Right cardiac atrium (tissue), 5 donors: ENCODE measurements at regions of chr6 and their contacts with region 1.

Region 1: GRCh38 chr6:46410334-46410953 is 80.8 kb downstream of the RCAN2 start:
- DNase-seq: no peak
- ATAC-seq: peak in 1 of 2 donors; percentile 45
- H3K4me3 ChIP-seq: no peak overlapping the region
- H3K27ac ChIP-seq: no peak overlapping the region
- H3K4me1 ChIP-seq: peaks cover 9% of the 10 kb centered on the region
- H3K27me3 ChIP-seq: no peaks in the 10 kb centered on the region

Region 2: DNA sequence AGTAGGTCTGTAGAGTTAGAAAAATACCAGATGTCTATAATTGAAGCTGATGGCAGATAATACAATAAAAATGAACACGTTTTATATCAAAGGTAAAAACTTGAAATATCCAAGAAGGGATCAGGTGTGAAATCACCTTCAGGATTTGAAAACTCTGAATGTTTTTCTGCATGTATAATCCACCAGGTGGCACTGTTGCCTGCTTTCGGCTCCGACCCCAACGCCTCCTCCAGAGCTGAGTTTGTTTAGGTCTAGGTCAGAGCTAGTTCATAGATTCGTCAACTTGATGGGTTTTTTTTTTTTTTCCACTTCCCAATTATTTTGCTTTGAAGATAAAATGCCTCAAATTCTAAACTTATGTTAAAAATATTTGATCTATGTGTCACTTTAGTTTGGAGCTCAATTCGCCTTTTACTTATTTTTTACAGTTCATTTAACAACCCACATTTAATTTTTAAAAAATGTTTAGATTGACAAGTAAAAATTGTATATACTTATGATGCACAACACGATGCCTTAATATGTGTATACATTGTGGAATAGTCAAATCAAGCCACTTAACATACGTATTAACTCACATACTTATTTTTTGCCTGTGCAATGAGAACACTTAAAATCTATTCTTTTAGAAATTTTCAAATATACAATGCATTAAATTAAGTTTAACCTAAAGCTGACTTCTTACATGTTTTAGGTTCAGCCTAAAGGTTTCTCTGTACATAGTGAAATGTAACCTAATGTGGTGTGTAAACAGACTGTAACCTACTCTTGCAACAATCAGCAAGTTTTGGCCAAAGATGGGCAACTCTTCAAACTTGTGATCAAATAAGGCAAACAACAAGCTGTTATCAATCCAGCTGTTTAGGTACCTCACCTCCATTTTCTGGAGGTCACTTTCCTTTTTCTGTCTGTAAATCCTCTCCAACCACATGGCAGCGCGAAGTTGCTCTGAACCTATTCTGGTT is 320.0 kb before region 1 on chr6:
- intact Hi-C with region 1: loop called (anchors 5 kb)
- DNase-seq: peak; percentile 50 to 74 (median 61)
- ATAC-seq: peak; percentile 51 to 68
- H3K4me3 ChIP-seq: no peak overlapping the region
- H3K27ac ChIP-seq: no peak overlapping the region
- H3K4me1 ChIP-seq: no peaks in the 10 kb centered on the region
- H3K27me3 ChIP-seq: no peaks in the 10 kb centered on the region

Region 3: DNA sequence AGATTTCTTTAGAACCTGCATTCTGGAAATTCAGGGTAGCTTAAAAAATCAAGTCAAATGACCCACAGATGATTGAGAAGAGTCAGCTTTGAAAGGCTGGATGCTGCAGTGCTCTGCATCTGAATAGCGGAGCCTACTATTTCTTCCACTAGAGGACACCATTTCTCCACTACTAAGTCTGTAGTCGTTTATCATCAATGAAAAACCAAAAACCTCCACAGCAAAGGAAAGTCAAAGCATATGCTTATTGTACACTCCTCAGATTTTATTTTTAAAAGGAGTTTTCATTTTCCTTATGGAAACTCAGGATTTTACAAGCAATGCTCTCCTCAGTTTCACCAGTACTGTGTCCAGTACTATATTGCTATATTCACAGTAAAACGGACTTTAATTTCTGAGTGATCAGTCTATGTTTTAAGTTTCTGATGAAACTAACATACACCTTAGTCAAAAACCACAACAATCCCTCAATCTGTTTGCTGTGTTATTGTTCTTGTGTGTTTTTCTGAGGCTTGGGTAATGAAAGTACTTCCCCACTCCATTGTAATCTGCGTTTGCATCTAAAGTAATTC is 189.1 kb before region 1 on chr6:
- intact Hi-C with region 1: loop called in 3 of 4 experiments (anchors 2 to 5 kb)
- DNase-seq: no peak
- ATAC-seq: peak; percentile 53 to 59
- H3K4me3 ChIP-seq: no peak overlapping the region
- H3K27ac ChIP-seq: no peak overlapping the region
- H3K4me1 ChIP-seq: peaks cover 6% of the 10 kb centered on the region
- H3K27me3 ChIP-seq: no peaks in the 10 kb centered on the region

Region 4: GRCh38 chr6:46234156-46234556 is 176.3 kb before region 1 on chr6:
- intact Hi-C with region 1: loop called in 1 of 4 experiments (anchors 5 kb)
- DNase-seq: peak; percentile 60 to 89 (median 75)
- ATAC-seq: peak; percentile 92 to 95
- H3K4me3 ChIP-seq: no peak overlapping the region
- H3K27ac ChIP-seq: peak overlapping the region; percentile 18
- H3K4me1 ChIP-seq: peaks cover 7% of the 10 kb centered on the region
- H3K27me3 ChIP-seq: no peaks in the 10 kb centered on the region

Region 5: GRCh38 chr6:46815130-46815529 is 404.7 kb after region 1 on chr6:
- intact Hi-C with region 1: no loop called
- DNase-seq: no peak
- ATAC-seq: no peak
- H3K4me3 ChIP-seq: no peak overlapping the region
- H3K27ac ChIP-seq: no peak overlapping the region
- H3K4me1 ChIP-seq: no peaks in the 10 kb centered on the region
- H3K27me3 ChIP-seq: no peaks in the 10 kb centered on the region

Region 6: DNA sequence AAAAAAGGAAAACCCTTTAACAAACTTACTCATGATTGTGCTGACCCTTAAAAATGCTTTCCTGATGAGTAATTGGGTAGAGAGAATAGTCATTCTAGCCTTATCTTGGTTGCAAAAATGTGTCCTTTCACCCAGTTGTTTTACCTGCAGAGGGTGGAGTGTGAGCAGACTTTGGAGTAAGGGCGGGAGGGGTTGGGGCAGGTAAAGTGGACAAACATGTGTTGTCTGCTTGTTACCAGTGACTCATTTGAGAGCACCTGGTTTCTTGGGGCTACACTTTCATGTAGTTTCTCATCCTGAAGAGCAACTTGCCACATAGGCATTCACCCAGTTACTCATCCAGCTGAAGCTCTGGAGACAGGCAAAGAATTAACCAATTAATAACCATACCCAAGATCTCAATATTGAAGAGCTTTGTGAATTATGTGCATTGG is 778.2 kb after region 1 on chr6:
- intact Hi-C with region 1: no loop called
- DNase-seq: no peak
- ATAC-seq: no peak
- H3K4me3 ChIP-seq: no peak overlapping the region
- H3K27ac ChIP-seq: no peak overlapping the region
- H3K4me1 ChIP-seq: no peaks in the 10 kb centered on the region
- H3K27me3 ChIP-seq: no peaks in the 10 kb centered on the region